ENCODE measurements at regions of chr4 and their contacts with region 1.

Region 1: DNA sequence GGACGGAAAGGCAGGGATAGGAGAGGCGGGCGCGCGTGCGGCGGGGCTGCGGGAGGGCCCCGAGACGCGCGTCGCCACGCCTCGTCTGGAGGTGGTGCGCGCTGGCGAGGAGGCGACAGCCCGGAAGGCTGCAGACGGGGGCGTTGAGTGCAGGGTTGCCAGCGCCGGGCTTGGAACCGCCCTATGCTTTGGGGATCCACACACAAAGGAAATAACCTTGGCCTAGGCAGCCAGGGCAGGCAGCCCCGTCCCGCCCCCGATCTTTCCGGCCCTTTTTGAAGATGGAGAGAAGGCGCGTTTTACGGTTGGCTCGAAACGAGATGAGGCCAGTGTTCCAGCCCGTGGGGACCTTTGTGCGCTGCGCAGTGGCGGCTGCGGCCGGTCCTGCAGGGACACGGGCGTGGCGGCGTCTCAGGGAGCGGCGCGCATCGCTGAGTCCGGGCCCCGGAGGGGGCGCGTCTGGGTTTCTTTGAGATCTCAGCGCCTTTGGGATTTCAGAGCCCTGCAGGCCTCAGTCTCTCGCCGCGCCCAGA is 50.8 kb upstream of the TRIM2 start:
- DNase-seq: peak; percentile 71 to 84 (median 84)
- ATAC-seq: peak; percentile 87
- H3K4me3 ChIP-seq: peak overlapping the region; percentile 19
- H3K4me1 ChIP-seq: peaks cover 15% of the 10 kb centered on the region
- CTCF ChIP-seq: no peak

Region 2: DNA sequence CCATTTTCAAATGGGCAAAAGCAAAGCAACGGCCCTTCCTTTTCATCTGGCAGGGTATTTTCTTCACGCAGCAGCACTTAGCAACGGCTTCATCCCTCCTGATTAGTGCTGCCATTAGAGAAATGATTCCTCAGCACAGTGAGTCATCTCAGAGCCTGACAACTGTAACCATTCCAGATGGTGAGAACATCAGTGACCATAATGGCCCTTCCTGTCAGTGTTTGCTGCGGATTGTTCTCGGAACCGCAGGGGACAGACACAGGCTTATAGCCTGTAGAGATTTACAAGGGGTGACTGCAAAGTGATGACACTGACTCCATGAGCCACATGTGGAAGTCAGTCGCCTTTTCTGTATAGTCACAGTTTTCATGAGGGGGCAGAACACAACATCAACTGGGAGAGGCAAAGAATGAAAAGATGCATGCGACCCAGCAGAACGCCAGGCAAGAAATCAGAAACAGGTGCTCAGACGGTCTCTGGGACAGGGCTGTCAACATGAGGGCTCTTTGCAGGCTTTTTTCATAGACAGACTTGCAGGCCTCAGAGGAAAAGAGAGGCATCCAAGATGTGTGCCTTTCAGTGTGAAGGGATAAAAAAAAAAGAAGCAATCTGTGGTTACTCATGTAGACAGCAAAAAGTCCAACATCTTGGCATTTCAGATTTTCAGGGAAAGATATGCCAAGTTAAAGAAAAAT is 547.6 kb before region 1 on chr4:
- intact Hi-C with region 1: no loop called
- DNase-seq: no peak
- ATAC-seq: peak; percentile 55
- H3K4me3 ChIP-seq: no peak overlapping the region
- H3K4me1 ChIP-seq: no peaks in the 10 kb centered on the region
- CTCF ChIP-seq: no peak

Region 3: GRCh38 chr4:153107246-153107645 is 46.2 kb before region 1 on chr4:
- intact Hi-C with region 1: no loop called
- DNase-seq: no peak
- ATAC-seq: no peak
- H3K4me3 ChIP-seq: no peak overlapping the region
- H3K4me1 ChIP-seq: no peaks in the 10 kb centered on the region
- CTCF ChIP-seq: no peak

Region 4: GRCh38 chr4:153204247-153205027 is 51.0 kb after region 1 on chr4 and contains the start of gene TRIM2:
- intact Hi-C with region 1: loop called in 1 of 2 experiments (anchors 10 kb)
- DNase-seq: peak; percentile 73 to 90 (median 78)
- ATAC-seq: peak; percentile 67
- H3K4me3 ChIP-seq: peak within 1 kb of the TSS; percentile 12
- H3K4me1 ChIP-seq: peaks cover 18% of the 10 kb centered on the region
- CTCF ChIP-seq: no peak
- total RNA-seq, gene TRIM2: 96.4 to 167 (median 154) TPM

Region 5: GRCh38 chr4:153318696-153319320 is 165.4 kb after region 1 on chr4:
- intact Hi-C with region 1: loop called in 1 of 2 experiments (anchors 5 kb)
- DNase-seq: peak in 1 of 3 donors; percentile 52
- ATAC-seq: peak; percentile 47
- H3K4me3 ChIP-seq: no peak overlapping the region
- H3K4me1 ChIP-seq: no peaks in the 10 kb centered on the region
- CTCF ChIP-seq: no peak

Region 6: GRCh38 chr4:153374442-153374841 is 221.0 kb after region 1 on chr4:
- intact Hi-C with region 1: no loop called
- DNase-seq: no peak
- ATAC-seq: no peak
- H3K4me3 ChIP-seq: no peak overlapping the region
- H3K4me1 ChIP-seq: no peaks in the 10 kb centered on the region
- CTCF ChIP-seq: no peak